ENCODE measurements at regions of chr5 and their contacts with region 1.

Region 1: DNA sequence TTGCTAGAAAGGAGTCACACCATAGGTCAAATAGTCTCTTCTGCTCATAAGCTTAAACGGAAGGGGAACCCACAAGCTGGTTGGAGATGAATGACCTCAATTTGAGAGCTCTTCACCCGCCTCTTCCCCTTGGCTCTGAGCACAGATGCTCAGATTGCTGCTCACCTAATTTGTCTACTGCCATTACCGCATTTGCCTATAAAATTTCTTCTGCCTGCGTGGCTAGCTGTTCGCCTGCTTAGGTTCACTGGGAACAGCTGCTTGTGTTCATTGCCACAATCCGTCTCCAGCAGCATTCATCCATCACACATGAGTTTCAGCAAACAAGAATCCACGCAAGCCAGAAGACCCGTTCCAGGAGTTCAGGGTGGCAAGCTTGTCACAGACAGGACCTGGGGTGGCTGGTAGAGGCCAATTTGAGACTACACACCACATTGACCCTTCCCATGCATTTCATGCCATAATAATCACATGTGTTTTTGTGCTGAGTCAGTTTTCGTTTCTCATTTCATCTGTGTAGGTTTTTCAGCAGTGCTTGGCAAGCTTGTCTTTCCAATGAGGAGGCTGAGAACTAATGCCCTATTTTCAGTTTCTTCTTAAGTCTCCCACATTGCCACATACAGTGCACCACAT is 50.2 kb upstream of the DNAH5 start:
- DNase-seq: no peak
- ATAC-seq: no peak
- H3K4me3 ChIP-seq: no peak overlapping the region
- H3K27ac ChIP-seq: no peak overlapping the region
- H3K4me1 ChIP-seq: no peaks in the 10 kb centered on the region
- H3K27me3 ChIP-seq: peaks cover 0 to 3% (median 0%) of the 10 kb centered on the region in 7 donors
- CTCF ChIP-seq: no peak

Region 2: GRCh38 chr5:14270209-14270702 is 275.5 kb after region 1 on chr5:
- intact Hi-C with region 1: loop called in 7 of 10 experiments (anchors 5 to 10 kb)
- DNase-seq: peak in 1 of 2 donors; percentile 79
- ATAC-seq: peak; percentile 90 to 96 (median 95)
- H3K4me3 ChIP-seq: no peak overlapping the region
- H3K27ac ChIP-seq: peak overlapping the region in 9 of 10 donors; percentile 38 to 84 (median 68)
- H3K4me1 ChIP-seq: peaks cover 18 to 71% (median 51%) of the 10 kb centered on the region in 9 donors
- H3K27me3 ChIP-seq: no peaks in the 10 kb centered on the region
- CTCF ChIP-seq: peak; percentile 64 to 92 (median 83)